MCF 10A (cell line): ENCODE measurements at regions of chr20 and their contacts with region 1.

Region 1: DNA sequence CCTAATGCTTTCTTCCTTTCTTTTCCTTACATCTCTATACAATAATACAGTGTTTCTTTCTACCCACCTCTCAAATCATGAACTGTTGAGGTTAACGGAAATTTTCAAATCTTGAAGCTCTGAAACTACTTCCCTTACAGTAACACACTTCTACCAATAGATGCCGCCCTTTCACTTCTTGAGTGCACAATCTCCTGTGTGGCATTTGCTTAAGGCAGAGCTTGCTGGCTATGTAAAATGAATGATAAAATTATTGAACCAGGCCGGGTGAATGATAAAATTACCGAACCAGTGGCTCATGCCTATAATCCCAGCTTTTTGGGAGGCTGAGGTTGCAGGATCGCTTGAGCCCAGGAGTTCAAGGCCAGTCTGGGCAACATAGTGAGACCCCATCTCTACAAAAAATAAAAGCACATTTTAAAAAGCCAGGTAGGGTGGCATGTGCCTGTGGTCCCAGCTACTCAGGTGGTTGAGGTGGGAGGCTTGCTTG is 56.8 kb downstream of the KCNS1 start:
- DNase-seq: peak; percentile 88
- H3K4me3 Mint-ChIP-seq: no peak overlapping the region
- H3K27ac Mint-ChIP-seq: peak overlapping the region; percentile 73
- H3K4me1 Mint-ChIP-seq: peaks cover 33% of the 10 kb centered on the region
- H3K27me3 Mint-ChIP-seq: no peaks in the 10 kb centered on the region
- CTCF ChIP-seq: peak; percentile 90

Region 2: DNA sequence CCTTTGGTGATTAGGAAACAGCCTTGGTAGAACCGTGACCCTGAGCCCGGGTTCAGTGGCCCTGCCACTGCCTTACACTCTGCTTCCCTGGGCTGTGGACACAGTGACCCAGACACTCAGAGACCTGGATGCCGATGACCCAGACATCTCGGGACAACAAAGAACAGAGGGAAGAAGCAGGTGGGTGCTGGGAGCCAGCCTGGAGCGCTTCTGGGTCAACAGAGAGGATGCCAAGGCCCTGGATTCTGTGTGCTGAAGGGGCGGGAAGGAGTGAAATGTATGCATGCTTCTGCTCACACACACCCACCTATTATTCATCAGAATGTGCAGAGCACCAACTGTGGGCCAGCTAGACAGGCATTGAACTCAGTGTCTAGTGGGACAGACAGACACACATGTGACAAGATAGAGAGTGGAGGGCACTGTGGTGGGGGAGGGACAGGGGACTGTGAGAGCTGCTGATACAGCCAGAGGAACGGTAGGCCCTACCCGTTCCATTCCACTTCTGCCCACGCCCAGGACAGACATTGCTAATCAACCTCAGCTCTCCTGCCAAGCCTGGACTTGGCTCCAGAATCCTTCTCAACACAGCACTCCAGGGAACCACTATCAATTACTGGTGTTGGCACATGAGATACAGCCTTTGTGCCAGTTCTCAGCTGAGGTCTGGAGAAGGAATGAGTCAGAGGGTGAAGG is 278.3 kb before region 1 on chr20:
- CTCF ChIA-PET with region 1: no interaction called
- POLR2A ChIA-PET with region 1: no interaction called
- intact Hi-C with region 1: no loop called
- DNase-seq: peak; percentile 84
- H3K4me3 Mint-ChIP-seq: no peak overlapping the region
- H3K27ac Mint-ChIP-seq: no peak overlapping the region
- H3K4me1 Mint-ChIP-seq: peaks cover 12% of the 10 kb centered on the region
- H3K27me3 Mint-ChIP-seq: peaks cover 43% of the 10 kb centered on the region
- CTCF ChIP-seq: no peak

Region 3: GRCh38 chr20:45020236-45020886 is 23.8 kb before region 1 on chr20:
- CTCF ChIA-PET with region 1: interaction called, 22 read pairs
- POLR2A ChIA-PET with region 1: interaction called, 80 read pairs
- intact Hi-C with region 1: no loop called
- DNase-seq: peak; percentile 76
- H3K4me3 Mint-ChIP-seq: no peak overlapping the region
- H3K27ac Mint-ChIP-seq: peak overlapping the region; percentile 65
- H3K4me1 Mint-ChIP-seq: peaks cover 28% of the 10 kb centered on the region
- H3K27me3 Mint-ChIP-seq: no peaks in the 10 kb centered on the region
- CTCF ChIP-seq: no peak

Region 4: DNA sequence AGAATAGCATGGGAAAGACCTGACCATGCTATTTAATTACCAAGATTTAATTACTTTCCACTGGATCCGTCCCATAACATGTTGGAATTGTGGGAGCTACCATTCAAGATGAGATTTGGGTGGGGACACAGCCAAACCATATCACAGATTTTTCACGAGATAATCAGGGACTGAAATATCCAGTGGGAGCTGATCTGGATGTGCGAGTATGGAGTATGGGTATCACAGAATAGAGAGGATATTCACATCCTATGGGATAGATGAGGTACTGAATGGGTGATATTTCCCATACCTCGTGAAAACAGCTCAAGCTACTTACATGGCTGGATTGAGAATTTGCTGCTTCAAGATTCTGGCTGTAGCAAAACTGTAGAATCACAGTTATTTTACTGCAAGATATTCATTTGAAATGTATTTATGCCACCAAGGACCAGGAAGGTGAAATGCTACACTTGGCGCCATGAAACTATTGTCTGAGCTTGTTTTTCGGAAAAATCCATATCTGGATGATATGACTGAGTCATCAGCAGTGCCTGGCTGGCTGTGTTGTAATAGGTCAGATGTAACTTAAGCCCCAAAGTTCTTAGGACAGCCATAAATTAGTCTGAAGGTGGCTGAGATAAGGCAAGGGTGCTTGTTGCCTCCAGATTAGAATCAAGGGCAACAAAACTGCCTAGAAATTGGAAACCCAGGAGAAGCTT is 27.0 kb after region 1 on chr20:
- CTCF ChIA-PET with region 1: interaction called, 14 read pairs
- POLR2A ChIA-PET with region 1: interaction called, 17 read pairs
- intact Hi-C with region 1: no loop called
- DNase-seq: peak; percentile 76
- H3K4me3 Mint-ChIP-seq: no peak overlapping the region
- H3K27ac Mint-ChIP-seq: no peak overlapping the region
- H3K4me1 Mint-ChIP-seq: peaks cover 21% of the 10 kb centered on the region
- H3K27me3 Mint-ChIP-seq: no peaks in the 10 kb centered on the region
- CTCF ChIP-seq: no peak

Region 5: DNA sequence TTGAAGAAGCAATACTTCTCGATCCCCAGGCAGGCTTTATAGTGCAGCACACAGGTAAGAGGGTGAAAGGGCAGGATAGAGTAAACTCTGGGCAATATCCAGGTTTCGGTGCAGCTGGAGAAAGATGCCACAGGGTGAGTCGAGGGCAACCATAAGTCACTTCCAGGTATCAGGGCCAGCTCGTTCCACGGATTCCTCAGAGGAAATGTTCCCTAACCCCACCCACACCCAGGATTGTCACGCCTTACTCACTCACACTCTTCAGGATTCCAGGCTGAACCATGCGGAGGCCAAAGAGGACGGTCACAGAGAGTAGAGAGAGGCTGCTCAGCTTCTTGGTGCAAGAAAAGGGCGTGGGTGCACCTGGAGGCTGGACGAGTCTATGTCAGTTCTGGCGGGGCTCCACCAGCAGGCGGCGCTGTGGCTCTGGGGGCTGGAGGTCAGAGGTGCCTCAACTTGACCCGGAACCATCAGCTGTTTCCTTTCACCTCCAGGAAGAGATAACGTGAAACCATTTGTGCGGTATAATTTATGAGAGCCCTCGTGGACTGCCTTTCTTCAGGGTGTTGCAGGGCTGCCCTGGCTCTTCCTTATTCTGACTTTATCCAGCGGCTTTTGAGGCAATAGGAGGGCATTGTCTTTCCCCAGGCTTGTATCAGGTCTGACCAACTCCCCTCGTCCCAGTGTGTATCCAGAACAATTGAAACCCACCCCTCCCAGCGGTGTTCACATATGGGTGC is 94.6 kb after region 1 on chr20:
- CTCF ChIA-PET with region 1: interaction called, 18 read pairs
- POLR2A ChIA-PET with region 1: no interaction called
- intact Hi-C with region 1: no loop called
- DNase-seq: peak; percentile 74
- H3K4me3 Mint-ChIP-seq: no peak overlapping the region
- H3K27ac Mint-ChIP-seq: no peak overlapping the region
- H3K4me1 Mint-ChIP-seq: no peaks in the 10 kb centered on the region
- H3K27me3 Mint-ChIP-seq: no peaks in the 10 kb centered on the region
- CTCF ChIP-seq: peak; percentile 85